ENCODE measurements at regions of chr21 and their contacts with region 1.

Region 1: DNA sequence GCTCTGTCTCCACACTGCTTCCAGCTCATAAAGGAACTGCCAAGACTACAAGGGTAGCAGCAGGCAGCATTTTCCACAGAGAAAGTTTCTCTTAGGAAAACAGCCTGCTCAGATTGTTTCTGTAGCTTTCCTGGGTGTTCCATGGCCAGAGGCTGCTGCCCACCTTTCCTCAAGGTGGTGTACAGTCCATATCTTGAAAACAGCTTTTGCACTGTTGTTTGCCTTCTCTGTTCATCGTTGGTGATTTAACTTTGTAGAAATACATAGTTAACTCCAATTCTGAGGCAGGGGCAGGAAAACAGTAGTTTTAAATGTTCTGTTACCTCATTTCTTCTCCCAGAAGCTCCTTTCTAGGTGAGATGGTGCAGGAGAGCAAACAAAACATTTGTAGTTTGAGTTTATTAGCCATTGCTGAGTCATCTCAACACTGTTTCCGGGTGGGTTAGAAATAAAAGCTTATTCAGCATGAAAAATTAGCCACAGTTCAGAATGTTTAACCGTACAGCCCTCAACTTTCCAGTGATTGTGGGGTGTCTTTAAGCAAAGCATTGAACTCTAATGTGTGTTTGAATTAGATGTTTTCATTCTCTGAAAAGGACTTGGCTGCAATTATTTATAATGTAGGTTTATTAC is 41.6 kb downstream of the DIP2A start:
- DNase-seq: peak in 4 of 5 donors; percentile 14 to 27 (median 20)
- H3K4me3 ChIP-seq: no peak overlapping the region
- H3K4me3 Mint-ChIP-seq: peak overlapping the region in 4 of 8 donors; percentile 13 to 46 (median 28)
- H3K27ac ChIP-seq: no peak overlapping the region
- H3K27ac Mint-ChIP-seq: peak overlapping the region in 6 of 7 donors; percentile 70 to 89 (median 80)
- H3K4me1 ChIP-seq: peaks cover 32% of the 10 kb centered on the region
- H3K4me1 Mint-ChIP-seq: peaks cover 21 to 57% (median 30%) of the 10 kb centered on the region in 4 donors
- H3K27me3 ChIP-seq: no peaks in the 10 kb centered on the region
- H3K27me3 Mint-ChIP-seq: no peaks in the 10 kb centered on the region

Region 2: DNA sequence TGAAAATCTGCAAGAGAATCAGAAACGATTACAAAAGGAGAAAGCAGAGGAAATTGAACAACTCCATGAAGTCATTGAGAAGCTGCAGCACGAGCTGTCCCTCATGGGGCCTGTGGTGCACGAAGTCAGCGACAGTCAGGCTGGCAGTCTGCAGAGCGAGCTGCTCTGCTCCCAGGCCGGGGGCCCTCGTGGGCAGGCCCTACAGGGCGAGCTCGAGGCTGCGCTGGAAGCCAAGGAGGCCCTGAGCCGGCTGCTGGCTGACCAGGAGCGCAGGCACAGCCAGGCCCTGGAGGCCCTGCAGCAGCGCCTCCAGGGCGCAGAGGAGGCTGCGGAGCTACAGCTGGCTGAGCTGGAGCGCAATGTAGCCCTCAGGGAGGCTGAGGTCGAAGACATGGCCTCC is 89.1 kb before region 1 on chr21:
- CTCF ChIA-PET with region 1: no interaction called
- POLR2A ChIA-PET with region 1: no interaction called
- intact Hi-C with region 1: no loop called
- DNase-seq: no peak
- H3K4me3 ChIP-seq: no peak overlapping the region
- H3K4me3 Mint-ChIP-seq: no peak overlapping the region
- H3K27ac ChIP-seq: no peak overlapping the region
- H3K27ac Mint-ChIP-seq: no peak overlapping the region
- H3K4me1 ChIP-seq: no peaks in the 10 kb centered on the region
- H3K4me1 Mint-ChIP-seq: peaks cover 0 to 1% (median 0%) of the 10 kb centered on the region in 4 donors
- H3K27me3 ChIP-seq: no peaks in the 10 kb centered on the region
- H3K27me3 Mint-ChIP-seq: no peaks in the 10 kb centered on the region

Region 3: DNA sequence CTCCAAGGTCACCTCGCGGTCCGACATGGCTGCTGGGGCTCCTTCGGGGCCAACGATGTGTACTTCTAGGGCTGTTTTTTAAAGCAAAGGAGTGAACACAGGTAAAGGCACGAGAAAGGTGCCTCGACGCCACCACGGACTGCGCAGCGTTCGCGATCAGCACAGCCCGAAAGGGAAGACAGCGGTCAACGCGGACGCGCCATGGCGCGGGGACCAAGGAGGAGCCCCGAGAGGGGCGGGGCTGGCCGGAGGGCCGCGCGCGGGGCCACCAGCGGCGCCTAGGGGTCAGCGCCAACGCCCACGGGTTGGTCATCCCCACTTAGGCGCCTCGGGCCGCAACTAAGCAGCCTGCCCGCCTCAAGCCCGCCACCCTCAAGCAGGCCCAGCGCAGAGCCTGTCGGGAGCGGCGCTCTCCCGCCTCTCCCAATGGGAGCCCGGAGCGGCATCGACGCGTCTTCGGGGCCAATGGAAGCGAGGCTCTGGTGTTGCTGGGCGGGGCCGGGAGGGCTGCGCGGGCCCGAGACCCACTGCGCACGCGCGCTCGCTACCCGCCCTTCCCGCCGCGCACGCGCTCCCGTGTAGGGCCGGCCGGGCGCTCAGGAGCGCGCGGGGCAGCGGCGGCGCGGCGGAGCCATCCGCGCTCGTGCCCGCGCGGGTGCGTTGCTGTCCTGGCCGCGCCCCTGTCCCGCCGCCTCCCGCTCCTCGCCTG is 41.9 kb before region 1 on chr21 and contains the start of gene DIP2A:
- CTCF ChIA-PET with region 1: no interaction called
- POLR2A ChIA-PET with region 1: interaction called, 12 read pairs
- intact Hi-C with region 1: no loop called
- DNase-seq: peak; percentile 95 to 97 (median 96)
- H3K4me3 ChIP-seq: peak within 1 kb of the TSS; percentile 89 to 100
- H3K4me3 Mint-ChIP-seq: peak within 1 kb of the TSS; percentile 88 to 93 (median 92)
- H3K27ac ChIP-seq: peak within 1 kb of the TSS; percentile 74
- H3K27ac Mint-ChIP-seq: peak within 1 kb of the TSS; percentile 90 to 95 (median 94)
- H3K4me1 ChIP-seq: peaks cover 42% of the 10 kb centered on the region
- H3K4me1 Mint-ChIP-seq: peaks cover 28 to 60% (median 44%) of the 10 kb centered on the region in 4 donors
- H3K27me3 ChIP-seq: no peaks in the 10 kb centered on the region
- H3K27me3 Mint-ChIP-seq: no peaks in the 10 kb centered on the region
- total RNA-seq, gene DIP2A: 94.6 to 95.9 TPM

Region 4: GRCh38 chr21:46559291-46559983 is 59.1 kb after region 1 on chr21:
- CTCF ChIA-PET with region 1: interaction called, 10 read pairs
- POLR2A ChIA-PET with region 1: interaction called, 7 read pairs
- intact Hi-C with region 1: no loop called
- DNase-seq: peak; percentile 61 to 83 (median 66)
- H3K4me3 ChIP-seq: peak overlapping the region; percentile 45 to 46
- H3K4me3 Mint-ChIP-seq: peak overlapping the region; percentile 67 to 90 (median 78)
- H3K27ac ChIP-seq: peak overlapping the region; percentile 66
- H3K27ac Mint-ChIP-seq: peak overlapping the region; percentile 87 to 99 (median 97)
- H3K4me1 ChIP-seq: peaks cover 50% of the 10 kb centered on the region
- H3K4me1 Mint-ChIP-seq: peaks cover 29 to 82% (median 41%) of the 10 kb centered on the region in 4 donors
- H3K27me3 ChIP-seq: no peaks in the 10 kb centered on the region
- H3K27me3 Mint-ChIP-seq: no peaks in the 10 kb centered on the region

Measured in CD4-positive, alpha-beta memory T cell (primary cell).